ENCODE measurements at regions of chr1 and their contacts with region 1.

Region 1: DNA sequence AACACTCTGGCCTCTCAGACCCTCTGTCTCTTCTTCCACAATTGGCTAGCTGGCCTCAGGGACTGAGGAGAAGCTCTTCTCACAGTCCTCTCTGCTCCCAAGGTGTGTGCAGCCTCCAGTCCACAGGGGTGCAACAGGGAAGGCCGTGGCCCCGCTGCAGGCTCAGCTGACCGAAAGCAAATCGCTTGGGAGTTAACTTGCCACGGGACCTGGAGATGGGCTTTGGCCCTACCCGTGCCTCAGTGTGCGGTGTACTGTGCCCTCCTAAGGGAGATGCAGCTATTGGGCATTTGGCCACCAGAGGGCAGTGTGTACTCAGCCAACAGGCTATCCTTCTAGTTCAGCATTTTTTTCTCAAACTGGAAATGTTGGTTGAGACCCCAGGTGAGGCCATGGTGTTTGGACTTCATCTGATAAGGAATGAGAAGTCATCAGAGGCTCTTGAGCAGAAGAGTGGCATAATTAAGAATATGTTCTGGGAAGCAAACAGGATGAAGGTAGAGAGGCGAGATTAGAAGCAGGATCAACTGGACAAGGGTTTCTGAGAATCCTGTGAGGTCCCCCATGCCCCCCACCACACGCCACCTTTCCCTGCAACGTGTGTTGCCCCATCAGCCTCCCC is 42.5 kb upstream of the TMEM125 start:
- DNase-seq: peak; percentile 86
- H3K4me3 ChIP-seq: no peak overlapping the region
- H3K27ac ChIP-seq: no peak overlapping the region
- H3K4me1 ChIP-seq: peaks cover 4% of the 10 kb centered on the region
- CTCF ChIP-seq: peak; percentile 93

Region 2: GRCh38 chr1:43256675-43257570 is 29.7 kb after region 1 on chr1:
- CTCF ChIA-PET with region 1: no interaction called
- POLR2A ChIA-PET with region 1: no interaction called
- intact Hi-C with region 1: no loop called
- DNase-seq: no peak
- H3K4me3 ChIP-seq: no peak overlapping the region
- H3K27ac ChIP-seq: no peak overlapping the region
- H3K4me1 ChIP-seq: no peaks in the 10 kb centered on the region
- CTCF ChIP-seq: no peak

Region 3: GRCh38 chr1:43414634-43415223 is 187.5 kb after region 1 on chr1:
- CTCF ChIA-PET with region 1: interaction called, 8 read pairs
- POLR2A ChIA-PET with region 1: no interaction called
- intact Hi-C with region 1: loop called (anchors 1 kb)
- DNase-seq: peak; percentile 72
- H3K4me3 ChIP-seq: no peak overlapping the region
- H3K27ac ChIP-seq: no peak overlapping the region
- H3K4me1 ChIP-seq: no peaks in the 10 kb centered on the region
- CTCF ChIP-seq: peak; percentile 82

Region 4: DNA sequence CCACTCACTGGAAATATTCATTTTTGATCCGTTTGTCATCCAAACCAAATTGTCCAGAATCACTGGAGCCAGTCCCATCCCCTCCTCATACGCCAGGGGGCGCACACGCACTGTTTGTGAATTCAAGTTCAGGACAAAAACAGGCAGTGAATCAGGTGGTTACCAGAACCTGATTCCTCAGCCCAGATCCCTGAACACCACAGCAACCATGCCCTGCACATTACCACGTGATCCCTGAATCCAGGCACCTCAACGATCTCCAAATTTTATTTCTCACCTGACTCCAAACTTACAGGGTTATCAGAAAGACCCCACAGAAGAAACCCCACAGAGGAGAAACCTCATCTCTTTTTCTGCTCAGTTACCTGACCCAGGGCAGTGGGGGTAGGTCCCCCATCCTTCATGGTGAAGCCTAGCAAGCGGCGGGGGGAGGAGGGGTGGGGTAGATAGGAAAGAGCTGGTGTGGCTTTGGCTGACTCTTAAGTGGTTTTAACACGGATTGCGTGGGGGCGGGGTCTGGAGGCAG is 302.0 kb after region 1 on chr1:
- CTCF ChIA-PET with region 1: no interaction called
- POLR2A ChIA-PET with region 1: no interaction called
- intact Hi-C with region 1: loop called (anchors 1 kb)
- DNase-seq: peak; percentile 79
- H3K4me3 ChIP-seq: no peak overlapping the region
- H3K27ac ChIP-seq: no peak overlapping the region
- H3K4me1 ChIP-seq: peaks cover 3% of the 10 kb centered on the region
- CTCF ChIP-seq: peak; percentile 98

Region 5: GRCh38 chr1:43650310-43651085 is 423.2 kb after region 1 on chr1:
- CTCF ChIA-PET with region 1: no interaction called
- POLR2A ChIA-PET with region 1: interaction called, 6 read pairs
- intact Hi-C with region 1: loop called (anchors 10 kb)
- DNase-seq: peak; percentile 99
- H3K4me3 ChIP-seq: peak overlapping the region; percentile 98
- H3K27ac ChIP-seq: peak overlapping the region; percentile 61
- H3K4me1 ChIP-seq: peaks cover 27% of the 10 kb centered on the region
- CTCF ChIP-seq: no peak

Measured in OCI-LY7 (cell line).